ENCODE measurements at regions of chr17 and their contacts with region 1.

Region 1: DNA sequence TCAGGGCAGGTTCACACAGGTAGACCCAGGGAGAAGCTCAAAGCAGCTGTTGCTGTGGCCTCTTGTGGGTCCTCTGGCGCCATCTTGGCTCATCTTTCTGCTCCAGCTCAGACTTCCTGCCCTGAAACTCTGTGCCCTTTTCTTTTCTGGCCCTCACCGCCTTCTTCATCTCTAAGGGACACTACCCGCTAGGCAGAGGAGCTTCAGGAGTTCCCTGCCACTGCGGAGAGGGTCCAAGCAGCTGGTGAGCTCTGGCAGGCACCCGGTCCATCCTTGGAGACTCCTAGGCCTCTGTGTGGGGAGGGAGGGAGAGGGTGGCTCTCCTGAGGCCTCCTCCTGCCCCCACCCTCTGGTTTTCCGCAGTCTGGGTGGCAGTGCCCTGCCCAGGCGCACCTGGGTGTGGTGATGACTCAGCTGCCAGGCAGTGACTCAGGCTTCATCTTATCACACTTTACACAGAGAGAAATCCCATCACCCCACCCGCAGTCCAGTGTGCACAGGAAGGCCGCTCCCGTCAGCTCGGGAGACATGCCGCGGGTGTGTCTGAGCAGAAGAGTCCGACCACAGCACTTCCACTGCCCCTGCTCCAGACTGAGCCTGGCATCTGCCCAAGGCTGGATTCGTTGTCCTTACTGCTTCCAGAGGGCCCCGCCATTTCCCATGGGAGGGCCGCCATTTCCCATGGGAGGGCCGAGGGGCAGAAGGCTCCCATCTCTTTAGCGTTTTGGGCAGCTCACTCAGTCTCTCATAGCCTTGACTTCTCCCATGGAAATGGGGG is 7.3 kb downstream of the NT5C start:
- DNase-seq: peak; percentile 87
- H3K4me3 ChIP-seq: no peak overlapping the region
- H3K27ac ChIP-seq: peak overlapping the region; percentile 85
- H3K4me1 ChIP-seq: peaks cover 17% of the 10 kb centered on the region
- H3K27me3 ChIP-seq: no peaks in the 10 kb centered on the region
- CTCF ChIP-seq: no peak
- POLR2A ChIP-seq: peak; percentile 66

Region 2: DNA sequence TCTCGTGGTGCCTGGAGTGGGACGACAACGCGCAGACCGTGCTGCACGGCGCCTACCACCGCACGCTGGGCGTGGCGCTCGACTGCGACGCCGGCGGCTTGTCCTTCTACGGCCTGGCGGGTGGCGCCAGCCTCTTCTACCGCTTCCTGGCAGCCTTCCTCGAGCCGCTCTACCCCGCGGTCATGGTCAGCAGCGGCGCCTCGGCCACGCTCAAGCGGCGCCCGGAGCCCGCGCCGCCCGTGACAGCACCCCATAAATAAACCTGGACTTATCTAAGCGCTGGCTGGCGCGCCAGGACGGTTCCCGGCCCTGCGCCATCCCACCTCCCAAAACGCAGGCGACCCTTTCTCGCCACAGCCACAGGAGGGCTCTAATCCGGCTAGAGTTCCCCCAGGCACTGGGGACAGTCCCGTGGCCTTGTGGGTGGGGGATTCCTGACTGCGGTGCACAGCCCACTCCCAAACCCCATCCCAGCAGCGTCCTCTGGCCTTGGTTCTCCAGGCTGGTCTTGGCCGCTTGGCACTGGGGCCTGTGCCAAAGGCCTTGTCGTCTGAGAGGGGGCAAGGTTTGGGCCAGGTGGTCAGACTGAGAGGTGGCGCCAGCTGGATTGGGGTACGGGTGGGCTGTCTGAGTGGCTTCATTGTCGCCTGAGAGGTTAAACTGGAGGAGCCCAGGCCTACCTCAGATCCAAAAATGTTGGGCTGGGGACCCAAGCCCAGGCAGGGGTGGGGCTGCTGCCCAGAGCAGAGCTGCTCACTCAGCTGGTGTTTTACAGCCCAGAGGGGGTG is 46.5 kb before region 1 on chr17:
- CTCF ChIA-PET with region 1: no interaction called
- POLR2A ChIA-PET with region 1: no interaction called
- dilution Hi-C with region 1: no loop called
- intact Hi-C with region 1: no loop called
- DNase-seq: peak; percentile 58
- H3K4me3 ChIP-seq: peak overlapping the region in 1 of 3 experiments; percentile 34
- H3K27ac ChIP-seq: peak overlapping the region; percentile 51
- H3K4me1 ChIP-seq: peaks cover 16% of the 10 kb centered on the region
- H3K27me3 ChIP-seq: no peaks in the 10 kb centered on the region
- CTCF ChIP-seq: peak in 1 of 2 donors; percentile 36
- POLR2A ChIP-seq: no peak

Region 3: DNA sequence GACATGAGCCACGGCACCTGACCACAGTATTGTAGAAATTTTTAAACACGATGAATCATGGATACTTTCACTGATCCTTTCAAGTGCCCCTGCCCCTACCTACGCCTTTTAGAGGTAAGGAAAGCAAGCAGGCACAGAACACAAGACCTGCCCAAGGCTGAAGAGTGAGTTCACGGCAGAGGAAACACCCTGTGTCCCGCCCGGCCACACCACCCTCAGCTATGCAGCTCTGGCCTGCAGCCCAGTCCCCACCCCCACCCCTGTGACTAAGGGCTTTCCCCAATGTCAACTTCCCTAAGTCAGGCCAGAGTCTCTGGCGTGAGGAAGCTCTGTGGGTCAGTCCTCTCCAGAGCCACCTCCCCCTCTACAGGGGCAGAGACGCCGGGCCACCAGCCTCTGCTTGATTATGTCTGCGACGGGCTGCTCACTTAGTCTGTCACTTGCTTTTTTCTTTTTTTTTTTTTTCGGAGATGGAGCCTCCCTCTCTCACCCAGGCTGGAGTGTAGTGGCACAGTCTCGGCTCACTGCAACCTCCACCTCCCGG is 28.1 kb before region 1 on chr17:
- CTCF ChIA-PET with region 1: no interaction called
- POLR2A ChIA-PET with region 1: no interaction called
- dilution Hi-C with region 1: no loop called
- intact Hi-C with region 1: loop called (anchors 1 kb)
- DNase-seq: peak; percentile 88
- H3K4me3 ChIP-seq: no peak overlapping the region
- H3K27ac ChIP-seq: peak overlapping the region; percentile 53
- H3K4me1 ChIP-seq: peaks cover 11% of the 10 kb centered on the region
- H3K27me3 ChIP-seq: no peaks in the 10 kb centered on the region
- CTCF ChIP-seq: no peak
- POLR2A ChIP-seq: no peak

Region 4: DNA sequence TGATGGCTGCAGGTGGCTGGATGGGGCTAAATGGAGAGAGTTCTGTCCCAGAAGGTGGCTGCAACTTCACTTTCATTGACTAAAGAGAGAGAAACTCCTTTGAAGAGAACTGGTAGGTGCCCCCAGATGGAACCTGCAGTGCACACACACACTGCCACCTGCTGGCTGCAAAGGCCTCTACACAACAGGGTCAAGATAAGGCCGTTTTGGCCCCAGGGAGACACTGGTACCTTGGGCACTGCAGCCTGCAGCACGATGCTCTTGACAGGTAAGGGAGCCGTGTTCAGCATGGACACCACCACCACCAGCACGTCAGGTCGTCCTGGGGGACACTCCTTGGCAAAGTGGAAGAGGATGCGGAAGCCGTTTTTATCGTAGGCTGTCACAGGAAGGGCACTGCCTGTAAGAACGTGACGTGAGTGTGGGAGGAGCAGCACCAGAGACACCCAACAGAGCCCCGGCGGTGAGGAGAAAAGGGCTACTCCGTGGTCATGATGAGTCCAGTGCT is 114.5 kb after region 1 on chr17:
- CTCF ChIA-PET with region 1: no interaction called
- POLR2A ChIA-PET with region 1: no interaction called
- dilution Hi-C with region 1: no loop called
- intact Hi-C with region 1: no loop called
- DNase-seq: peak; percentile 62
- H3K4me3 ChIP-seq: no peak overlapping the region
- H3K27ac ChIP-seq: no peak overlapping the region
- H3K4me1 ChIP-seq: no peaks in the 10 kb centered on the region
- H3K27me3 ChIP-seq: no peaks in the 10 kb centered on the region
- CTCF ChIP-seq: peak; percentile 86 to 92
- POLR2A ChIP-seq: no peak